Activated naive CD4-positive, alpha-beta T cell treated with anti-CD3 and anti-CD28 coated beads for 36 hours (primary cell): ENCODE measurements at regions of chr14 and their contacts with region 1.

Region 1: DNA sequence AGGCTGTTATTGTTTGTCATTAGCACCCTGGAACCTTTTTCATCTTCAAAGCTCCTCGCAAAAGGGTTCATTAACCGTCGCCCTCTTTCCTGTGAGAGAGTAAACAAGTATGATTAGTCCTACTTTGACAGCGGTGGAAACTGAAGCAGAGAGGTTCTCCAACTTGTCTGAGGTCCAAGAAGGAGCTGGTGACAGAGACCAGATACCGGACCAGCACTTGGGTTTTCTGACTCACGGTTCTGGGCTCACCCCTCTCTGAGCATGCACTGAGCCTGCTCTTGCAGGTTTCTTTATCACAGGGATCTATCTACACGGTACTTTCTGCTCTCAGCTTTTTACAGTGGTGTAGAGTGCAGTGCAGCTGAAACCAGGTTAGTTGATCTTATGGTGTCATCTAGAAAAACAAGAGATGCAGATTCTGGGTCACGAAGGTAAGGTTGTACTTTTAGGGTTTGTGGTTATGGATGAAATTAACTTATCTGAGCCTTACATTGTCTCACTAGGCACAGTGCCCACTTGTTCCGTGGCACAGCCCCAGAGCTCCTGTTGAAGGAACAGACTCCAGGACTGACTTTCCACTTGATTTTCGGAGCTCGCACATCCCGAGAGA is 62.1 kb downstream of the PPP2R5C start:
- DNase-seq: peak; percentile 86
- H3K4me3 Mint-ChIP-seq: peak overlapping the region; percentile 70
- H3K27ac Mint-ChIP-seq: peak overlapping the region; percentile 98
- H3K4me1 Mint-ChIP-seq: peaks cover 86% of the 10 kb centered on the region
- H3K27me3 Mint-ChIP-seq: no peaks in the 10 kb centered on the region

Region 2: DNA sequence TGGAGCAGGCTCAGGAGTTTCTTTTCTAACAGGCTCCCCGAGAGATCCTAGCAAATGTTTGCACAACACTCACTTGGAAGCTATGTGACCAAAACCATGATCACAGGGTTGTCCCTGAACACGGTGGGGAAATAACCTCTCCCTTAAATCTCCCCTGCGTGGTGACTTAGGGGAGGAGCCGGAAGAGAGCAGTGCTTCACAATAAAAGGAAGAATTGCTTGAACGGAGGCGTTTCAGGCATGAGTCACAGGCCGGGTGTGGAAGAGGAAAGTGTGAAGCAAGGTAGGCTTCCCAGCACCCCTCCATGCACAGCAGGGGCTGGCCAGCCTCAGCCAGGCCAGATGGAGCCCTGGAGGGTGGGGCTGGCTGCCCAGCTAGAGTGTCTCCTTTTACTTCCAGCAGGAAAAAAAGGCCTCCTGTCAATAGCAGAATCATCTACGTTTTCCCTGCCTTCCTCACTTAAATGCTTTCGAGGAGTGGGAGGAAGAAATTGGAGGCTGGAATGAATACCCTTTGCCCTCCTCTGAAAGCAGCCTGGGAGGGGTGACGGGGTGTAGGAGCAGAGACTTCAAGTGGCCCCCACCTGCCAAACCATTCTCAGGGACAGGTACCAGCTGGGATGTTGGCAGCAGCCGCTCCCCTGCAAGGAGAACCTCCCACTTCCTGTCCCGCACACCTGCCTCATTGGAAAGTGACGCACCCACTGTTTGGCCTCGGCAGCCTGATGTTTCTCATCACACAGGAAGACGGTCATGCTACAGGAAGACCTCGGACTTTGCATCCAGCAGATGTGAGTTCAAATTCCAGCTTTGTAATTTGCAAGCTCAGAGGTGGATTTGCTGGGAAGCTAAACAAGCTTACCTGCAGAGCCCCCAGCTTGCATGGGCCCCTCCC is 92.2 kb before region 1 on chr14:
- CTCF ChIA-PET with region 1: no interaction called
- intact Hi-C with region 1: loop called (anchors 1 kb)
- DNase-seq: peak; percentile 96
- H3K4me3 Mint-ChIP-seq: peak overlapping the region; percentile 71
- H3K27ac Mint-ChIP-seq: peak overlapping the region; percentile 98
- H3K4me1 Mint-ChIP-seq: peaks cover 53% of the 10 kb centered on the region
- H3K27me3 Mint-ChIP-seq: no peaks in the 10 kb centered on the region

Region 3: GRCh38 chr14:101791919-101792572 is 31.6 kb before region 1 on chr14:
- CTCF ChIA-PET with region 1: interaction called, 3 read pairs
- intact Hi-C with region 1: loop called (anchors 1 kb)
- DNase-seq: no peak
- H3K4me3 Mint-ChIP-seq: no peak overlapping the region
- H3K27ac Mint-ChIP-seq: peak overlapping the region; percentile 53
- H3K4me1 Mint-ChIP-seq: peaks cover 29% of the 10 kb centered on the region
- H3K27me3 Mint-ChIP-seq: no peaks in the 10 kb centered on the region

Region 4: DNA sequence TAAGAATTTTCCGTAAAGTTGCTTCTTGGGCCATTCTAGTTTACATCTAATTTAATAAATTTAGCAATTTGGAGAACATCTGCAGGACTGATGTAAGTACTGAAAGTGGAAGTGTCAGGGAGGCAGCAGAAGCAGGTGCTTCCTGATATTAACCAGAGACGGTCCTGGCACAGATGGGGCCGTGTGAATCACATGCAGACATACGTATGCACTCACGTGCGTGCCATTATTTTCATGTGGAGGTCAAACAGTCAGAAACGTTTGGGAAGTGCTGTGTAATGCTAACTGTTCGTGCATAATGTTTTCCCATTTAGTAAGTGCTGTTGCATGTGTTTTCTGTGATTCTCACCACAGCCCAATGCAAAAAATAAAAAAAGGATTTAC is 52.9 kb after region 1 on chr14:
- CTCF ChIA-PET with region 1: interaction called, 4 read pairs
- intact Hi-C with region 1: loop called (anchors 1 kb)
- DNase-seq: peak; percentile 94
- H3K4me3 Mint-ChIP-seq: peak overlapping the region; percentile 52
- H3K27ac Mint-ChIP-seq: peak overlapping the region; percentile 85
- H3K4me1 Mint-ChIP-seq: peaks cover 89% of the 10 kb centered on the region
- H3K27me3 Mint-ChIP-seq: no peaks in the 10 kb centered on the region

Region 5: GRCh38 chr14:102020058-102020971 is 196.7 kb after region 1 on chr14:
- CTCF ChIA-PET with region 1: no interaction called
- intact Hi-C with region 1: loop called (anchors 1 kb)
- DNase-seq: peak; percentile 82
- H3K4me3 Mint-ChIP-seq: no peak overlapping the region
- H3K27ac Mint-ChIP-seq: peak overlapping the region; percentile 87
- H3K4me1 Mint-ChIP-seq: peaks cover 22% of the 10 kb centered on the region
- H3K27me3 Mint-ChIP-seq: no peaks in the 10 kb centered on the region